Activated B cell treated with CpG ODN at 0.5 μM for 24 hours (primary cell): ENCODE measurements at regions of chr13 and their contacts with region 1.

Region 1: GRCh38 chr13:46387064-46387851 is at the start of gene RUBCNL:
- DNase-seq: peak; percentile 69
- ATAC-seq: peak; percentile 46
- H3K4me3 Mint-ChIP-seq: peak within 1 kb of the TSS; percentile 95
- H3K27ac Mint-ChIP-seq: peak within 1 kb of the TSS; percentile 93
- H3K4me1 Mint-ChIP-seq: peaks cover 68% of the 10 kb centered on the region
- H3K27me3 Mint-ChIP-seq: no peaks in the 10 kb centered on the region
- CTCF ChIP-seq: no peak
- total RNA-seq, gene RUBCNL: 133 and 168 TPM in 2 replicates

Region 2: DNA sequence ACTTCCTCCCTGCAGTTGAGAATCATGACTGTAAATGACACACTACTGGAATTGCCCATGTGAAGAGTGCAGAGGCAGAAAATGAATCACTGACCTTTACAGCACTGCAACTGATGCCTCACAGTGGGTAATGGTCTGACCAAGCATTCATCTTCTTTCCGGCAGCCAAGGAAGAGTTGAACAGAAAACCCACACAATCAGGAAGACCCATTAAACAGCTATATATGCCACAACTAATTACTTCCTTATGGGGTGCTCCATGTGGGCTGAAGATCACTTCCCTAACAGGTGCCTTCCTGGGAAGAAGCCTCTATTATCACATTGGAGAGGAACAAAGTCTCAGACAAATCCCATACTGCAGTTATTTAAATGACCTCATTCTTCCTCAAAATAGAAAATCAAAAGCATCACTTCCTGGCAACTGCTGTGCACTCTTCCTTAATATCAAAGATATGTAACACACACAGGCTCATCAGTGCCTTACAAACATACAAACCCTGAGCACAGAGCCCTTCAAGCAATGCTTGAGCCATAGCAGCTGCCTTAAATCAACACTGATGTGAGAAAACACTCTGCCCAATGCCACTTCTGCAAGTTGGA is 46.0 kb before region 1 on chr13:
- CTCF ChIA-PET with region 1: interaction called, 5 read pairs
- POLR2A ChIA-PET with region 1: interaction called, 12 read pairs
- intact Hi-C with region 1: loop called (anchors 1 kb)
- DNase-seq: no peak
- ATAC-seq: peak; percentile 83
- H3K4me3 Mint-ChIP-seq: peak overlapping the region; percentile 63
- H3K27ac Mint-ChIP-seq: peak overlapping the region; percentile 91
- H3K4me1 Mint-ChIP-seq: peaks cover 66% of the 10 kb centered on the region
- H3K27me3 Mint-ChIP-seq: no peaks in the 10 kb centered on the region
- CTCF ChIP-seq: no peak

Region 3: GRCh38 chr13:46369506-46370277 is 17.6 kb before region 1 on chr13:
- CTCF ChIA-PET with region 1: interaction called, 70 read pairs
- POLR2A ChIA-PET with region 1: interaction called, 95 read pairs
- intact Hi-C with region 1: loop called (anchors 1 kb)
- DNase-seq: no peak
- ATAC-seq: peak; percentile 64
- H3K4me3 Mint-ChIP-seq: peak overlapping the region; percentile 79
- H3K27ac Mint-ChIP-seq: peak overlapping the region; percentile 90
- H3K4me1 Mint-ChIP-seq: peaks cover 77% of the 10 kb centered on the region
- H3K27me3 Mint-ChIP-seq: no peaks in the 10 kb centered on the region
- CTCF ChIP-seq: no peak

Region 4: DNA sequence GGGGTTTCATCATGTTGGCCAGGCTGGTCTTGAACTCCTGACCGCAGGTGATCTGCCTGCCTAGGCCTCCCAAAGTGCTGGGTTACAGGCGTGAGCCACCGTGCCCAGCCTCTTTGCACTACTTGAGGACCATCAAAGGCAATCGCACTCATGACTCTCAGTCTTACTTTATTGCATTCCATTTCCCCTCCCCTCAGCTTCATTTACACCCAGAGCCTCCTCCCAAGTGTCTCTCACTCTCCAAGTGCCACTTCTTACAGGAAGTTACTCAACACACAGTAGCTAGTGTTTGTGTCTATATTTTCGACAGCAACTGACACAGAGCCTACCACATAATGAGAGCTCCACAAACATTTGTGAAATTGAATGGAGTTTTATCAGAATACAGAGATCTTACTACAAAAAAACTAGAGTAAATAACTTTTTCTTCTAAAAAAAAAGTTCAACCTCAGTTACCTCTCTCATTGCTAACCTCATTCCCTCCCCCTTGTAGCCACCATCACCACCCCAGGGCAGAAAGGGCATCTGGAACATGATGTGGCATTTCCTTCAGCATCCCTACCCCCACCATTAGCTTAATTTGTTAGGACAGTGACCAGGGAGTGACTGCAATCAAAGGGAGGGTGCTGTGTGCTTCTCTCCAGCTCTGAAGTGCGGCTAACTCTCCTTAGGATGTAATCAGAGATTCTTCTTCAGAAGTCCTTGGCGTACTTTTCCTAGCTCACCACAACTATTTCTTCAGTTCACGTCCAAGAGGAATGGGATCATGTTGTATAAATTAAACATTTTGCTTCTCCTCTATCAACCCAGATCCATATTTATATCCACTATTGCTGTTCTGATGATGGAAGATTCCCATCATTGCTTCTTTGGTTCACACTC is 16.8 kb after region 1 on chr13:
- CTCF ChIA-PET with region 1: interaction called, 3 read pairs
- POLR2A ChIA-PET with region 1: interaction called, 9 read pairs
- intact Hi-C with region 1: loop called (anchors 2 kb)
- DNase-seq: no peak
- ATAC-seq: no peak
- H3K4me3 Mint-ChIP-seq: no peak overlapping the region
- H3K27ac Mint-ChIP-seq: peak overlapping the region; percentile 60
- H3K4me1 Mint-ChIP-seq: peaks cover 61% of the 10 kb centered on the region
- H3K27me3 Mint-ChIP-seq: no peaks in the 10 kb centered on the region
- CTCF ChIP-seq: no peak